ENCODE measurements at regions of chr22 and their contacts with region 1.

Region 1: DNA sequence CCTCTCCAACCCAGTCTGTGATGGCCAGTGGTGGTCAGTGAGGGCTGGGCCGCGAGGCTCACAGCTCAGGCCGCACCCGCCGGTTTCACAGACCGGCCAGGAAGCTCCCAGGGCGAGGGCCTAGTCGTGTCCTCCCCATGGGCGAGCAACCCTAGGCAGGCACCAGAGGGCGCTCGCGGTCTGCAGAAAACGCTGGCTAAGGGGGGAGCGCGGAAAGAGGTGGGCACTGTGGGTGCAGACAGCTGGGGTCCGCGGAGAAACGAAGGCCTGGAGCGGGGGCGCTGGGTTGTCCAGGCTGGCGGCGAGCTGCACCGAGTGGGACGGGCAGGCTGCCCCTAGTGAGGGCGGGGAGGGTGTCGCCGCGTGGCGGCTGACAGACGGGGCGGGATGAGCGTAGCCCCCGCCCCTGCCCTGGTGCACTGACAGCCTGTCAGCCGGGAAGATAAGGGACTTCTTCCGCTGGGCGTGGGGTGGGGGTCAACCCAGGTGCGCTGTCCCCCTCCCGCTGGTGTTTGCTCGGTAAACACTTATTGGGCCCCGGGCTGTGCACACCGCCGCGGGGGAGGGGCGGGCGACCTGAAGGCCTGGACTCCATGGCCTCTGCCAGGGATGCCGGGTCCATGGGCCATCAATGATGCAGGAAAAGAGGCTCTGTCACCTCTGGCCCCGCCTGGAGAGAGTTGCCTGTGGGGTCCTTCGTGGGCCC is 7.5 kb downstream of the GP1BB start:
- DNase-seq: peak; percentile 88
- ATAC-seq: peak; percentile 94
- H3K4me3 Mint-ChIP-seq: peak overlapping the region; percentile 74
- H3K27ac Mint-ChIP-seq: no peak overlapping the region
- H3K4me1 Mint-ChIP-seq: peaks cover 3% of the 10 kb centered on the region
- H3K27me3 Mint-ChIP-seq: peaks cover 2% of the 10 kb centered on the region
- CTCF ChIP-seq: peak; percentile 71

Region 2: GRCh38 chr22:19909350-19910179 is 178.8 kb after region 1 on chr22:
- CTCF ChIA-PET with region 1: interaction called, 144 read pairs
- POLR2A ChIA-PET with region 1: interaction called, 8 read pairs
- intact Hi-C with region 1: loop called (anchors 1 kb)
- DNase-seq: peak; percentile 69
- ATAC-seq: peak; percentile 91
- H3K4me3 Mint-ChIP-seq: no peak overlapping the region
- H3K27ac Mint-ChIP-seq: no peak overlapping the region
- H3K4me1 Mint-ChIP-seq: peaks cover 2% of the 10 kb centered on the region
- H3K27me3 Mint-ChIP-seq: no peaks in the 10 kb centered on the region
- CTCF ChIP-seq: no peak